Posterior vena cava (tissue), 2 donors: ENCODE measurements at regions of chr10 and their contacts with region 1.

Region 1: GRCh38 chr10:69639291-69640195 is 9.5 kb downstream of the FAM241B start:
- DNase-seq: peak; percentile 85

Region 2: DNA sequence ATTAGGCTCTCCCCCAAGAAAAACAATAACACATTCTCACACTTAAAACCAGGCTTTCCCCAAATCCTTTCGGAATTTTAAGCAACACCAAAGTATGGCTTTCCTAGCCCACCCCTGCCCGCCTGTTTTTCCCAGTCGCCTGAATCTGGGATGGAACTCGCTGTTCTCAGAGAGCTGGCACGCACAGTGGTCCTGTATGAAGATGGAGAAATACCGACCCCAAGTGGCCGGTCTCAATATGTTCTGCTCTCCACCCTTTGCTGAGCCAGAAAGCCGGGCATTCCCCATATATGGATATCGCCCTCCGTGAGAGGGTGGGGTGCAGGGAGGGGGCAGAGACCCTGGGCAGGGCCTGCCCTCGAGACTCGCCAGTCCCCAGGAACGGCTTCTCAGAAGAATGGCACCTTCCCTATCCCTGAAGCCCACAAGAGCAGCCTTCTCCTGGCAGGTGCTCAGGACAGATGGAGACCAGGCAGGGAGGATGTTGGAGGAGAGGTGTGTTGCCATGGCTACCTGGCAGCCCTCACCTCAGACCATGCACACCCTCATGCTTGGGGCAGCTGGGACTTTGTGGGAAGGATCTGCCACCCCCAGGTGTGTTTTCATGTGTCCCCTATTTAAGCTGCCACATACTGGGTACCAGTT is 226.2 kb before region 1 on chr10:
- intact Hi-C with region 1: loop called in 1 of 2 experiments (anchors 10 kb)
- DNase-seq: peak; percentile 88

Region 3: GRCh38 chr10:69425511-69426298 is 213.8 kb before region 1 on chr10:
- intact Hi-C with region 1: loop called in 1 of 2 experiments (anchors 10 kb)
- DNase-seq: no peak

Region 4: GRCh38 chr10:69515699-69516259 is 123.8 kb before region 1 on chr10:
- intact Hi-C with region 1: loop called in 1 of 2 experiments (anchors 5 kb)
- DNase-seq: peak; percentile 88

Region 5: DNA sequence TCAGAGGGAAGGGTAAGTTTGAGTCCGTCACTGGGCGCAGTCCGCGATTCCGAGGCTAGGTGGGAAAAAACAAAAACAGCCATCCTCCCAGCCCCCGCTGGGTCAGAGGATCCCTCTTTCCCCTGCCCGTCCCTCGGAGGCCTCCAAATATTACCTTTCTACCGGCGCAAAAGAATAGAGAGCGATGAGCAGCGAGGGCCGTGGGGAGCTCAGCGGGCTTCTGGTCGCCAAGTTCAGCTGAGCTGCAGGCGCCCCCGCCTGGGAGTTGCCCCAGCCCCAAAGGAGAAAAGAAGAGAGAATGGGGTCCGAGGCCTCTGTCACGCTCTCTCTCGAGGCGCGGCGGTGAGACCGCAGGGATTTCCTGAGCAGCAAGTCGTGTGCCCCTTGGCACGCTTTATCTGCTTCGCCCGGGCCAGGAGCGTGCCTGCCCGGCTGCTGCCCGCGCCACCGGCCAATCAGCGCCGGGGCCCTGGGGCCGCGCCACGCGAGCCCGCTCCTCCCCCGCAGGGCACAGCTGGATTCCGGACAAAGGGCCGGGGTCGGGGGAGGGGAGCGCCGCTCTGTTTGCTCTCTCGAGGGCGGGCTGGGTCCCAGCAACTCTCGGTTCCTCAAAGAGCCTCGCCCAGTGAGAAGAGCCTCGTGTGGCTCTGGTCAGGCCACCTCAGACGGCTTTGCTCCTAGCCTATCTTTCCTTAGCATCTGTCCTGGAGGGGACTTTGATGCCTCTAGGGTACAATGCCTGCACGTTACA is 66.3 kb before region 1 on chr10 and contains the start of gene NEUROG3:
- intact Hi-C with region 1: no loop called
- DNase-seq: no peak
- total RNA-seq, gene NEUROG3: not detected

Region 6: GRCh38 chr10:69914398-69915214 is 275.1 kb after region 1 on chr10:
- intact Hi-C with region 1: loop called in 1 of 2 experiments (anchors 10 kb)
- DNase-seq: peak; percentile 91

Region 7: DNA sequence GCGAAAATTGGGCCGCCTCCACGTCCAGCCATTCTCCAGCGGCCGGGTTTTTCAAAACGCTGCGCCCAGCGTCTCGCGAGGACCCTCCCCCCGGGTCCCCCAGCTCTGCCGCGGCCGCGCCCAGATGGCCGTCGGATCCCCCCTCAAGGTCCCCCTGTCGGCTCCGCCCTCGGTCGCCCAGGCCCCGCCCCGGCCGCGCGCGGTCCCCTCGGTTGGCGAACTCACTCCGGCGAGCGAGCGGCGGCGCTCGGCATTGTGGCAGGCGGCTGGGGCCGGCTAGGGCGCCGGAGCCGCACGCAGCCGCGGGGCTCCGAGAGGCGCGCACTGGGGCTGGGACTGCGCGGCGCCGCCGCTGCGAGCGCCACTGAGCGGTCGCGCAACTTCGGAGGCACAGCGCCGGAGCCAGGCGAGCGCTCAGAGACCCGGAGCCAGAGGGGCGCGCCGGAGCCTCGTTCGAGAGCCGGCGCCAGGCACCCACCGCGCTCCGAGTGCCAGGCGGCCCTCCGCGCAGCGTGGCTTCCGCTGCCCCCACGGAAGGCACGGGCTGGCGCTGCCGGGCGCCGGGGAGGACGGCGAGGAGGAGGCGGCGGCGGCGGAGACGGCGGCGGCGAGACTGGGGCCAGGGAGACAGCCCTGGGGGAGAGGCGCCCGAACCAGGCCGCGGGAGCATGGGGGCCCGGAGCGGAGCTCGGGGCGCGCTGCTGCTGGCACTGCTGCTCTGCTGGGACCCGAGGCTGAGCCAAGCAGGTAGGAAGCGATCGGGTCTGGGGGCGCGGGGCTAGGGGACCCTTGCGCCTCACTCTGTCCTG is 1573.0 kb after region 1 on chr10 and contains the start of gene UNC5B:
- intact Hi-C with region 1: loop called in 1 of 2 experiments (anchors 5 kb)
- DNase-seq: peak; percentile 97
- total RNA-seq, gene UNC5B: 7.1 to 8.4 TPM